Heart right ventricle (tissue), 16 donors: ENCODE measurements at regions of chr10 and their contacts with region 1.

Region 1: DNA sequence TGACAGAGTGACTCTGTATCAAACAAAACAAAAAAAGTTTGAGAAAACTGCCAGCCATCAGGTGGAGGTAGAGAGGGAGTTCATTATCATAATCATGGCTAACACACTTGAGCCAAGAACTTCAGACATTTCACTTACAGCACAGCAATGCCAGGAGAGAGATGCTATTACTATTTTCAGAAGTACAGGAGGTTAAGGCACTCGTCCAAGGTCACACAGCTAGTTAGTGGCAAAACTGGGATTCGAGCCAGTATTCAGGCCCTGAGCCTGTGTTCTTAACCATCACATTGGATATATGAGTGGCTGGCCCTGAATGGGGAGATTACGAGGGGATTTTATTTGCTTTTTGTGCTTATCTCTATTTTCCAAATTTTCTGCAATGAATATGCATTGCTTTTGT is 24.8 kb upstream of the UNC5B start:
- DNase-seq: peak in 1 of 2 donors; percentile 72
- ATAC-seq: peak; percentile 62 to 92 (median 86)
- H3K4me3 ChIP-seq: no peak overlapping the region
- H3K27ac ChIP-seq: peak overlapping the region in 3 of 10 donors; percentile 3 to 53 (median 7)
- H3K4me1 ChIP-seq: peaks cover 0 to 31% (median 10%) of the 10 kb centered on the region in 9 donors
- H3K27me3 ChIP-seq: peaks cover 0 to 12% (median 0%) of the 10 kb centered on the region in 7 donors
- CTCF ChIP-seq: peak in 1 of 9 donors; percentile 12

Region 2: GRCh38 chr10:70985824-70986622 is 201.6 kb before region 1 on chr10:
- intact Hi-C with region 1: no loop called
- DNase-seq: peak in 1 of 2 donors; percentile 16
- ATAC-seq: peak in 7 of 8 donors; percentile 32 to 86 (median 69)
- H3K4me3 ChIP-seq: no peak overlapping the region
- H3K27ac ChIP-seq: no peak overlapping the region
- H3K4me1 ChIP-seq: no peaks in the 10 kb centered on the region
- H3K27me3 ChIP-seq: no peaks in the 10 kb centered on the region
- CTCF ChIP-seq: no peak

Region 3: DNA sequence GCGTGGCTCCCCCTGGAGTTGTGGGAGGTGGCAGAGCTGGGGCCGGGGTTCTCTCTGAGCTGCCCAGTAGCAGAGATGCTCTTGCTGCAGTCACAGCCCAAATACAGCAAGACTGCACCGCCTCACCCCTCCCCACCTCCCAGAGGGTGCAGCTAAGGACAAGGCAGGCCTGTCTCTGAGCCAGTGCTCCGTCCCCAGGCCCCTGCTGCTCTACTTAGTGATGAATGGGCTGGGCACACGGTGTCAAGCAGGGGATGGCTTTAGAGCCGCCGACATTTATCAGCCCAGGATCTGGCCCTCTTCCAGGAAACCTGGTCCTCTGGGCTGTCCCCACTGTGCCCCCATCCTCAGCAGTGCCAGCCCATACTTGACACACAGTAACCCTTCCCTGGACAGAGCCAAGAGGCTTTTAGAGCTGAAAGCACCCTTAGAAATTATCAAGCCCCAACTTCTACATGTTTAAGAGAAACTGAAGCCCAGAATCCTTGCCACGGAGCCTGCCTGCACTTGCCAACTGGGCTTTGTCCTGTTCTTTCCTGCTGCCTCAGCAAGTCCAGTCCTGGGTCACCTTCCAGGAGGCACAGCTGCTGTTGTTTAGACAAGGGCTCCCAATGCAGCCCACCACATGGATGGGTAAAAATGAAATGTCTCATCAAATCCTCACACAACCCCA is 112.4 kb before region 1 on chr10:
- intact Hi-C with region 1: loop called in 2 of 10 experiments (anchors 10 kb)
- DNase-seq: peak in 1 of 2 donors; percentile 61
- ATAC-seq: peak; percentile 46 to 88 (median 61)
- H3K4me3 ChIP-seq: no peak overlapping the region
- H3K27ac ChIP-seq: no peak overlapping the region
- H3K4me1 ChIP-seq: peaks cover 0 to 35% (median 10%) of the 10 kb centered on the region in 9 donors
- H3K27me3 ChIP-seq: peaks cover 0 to 3% (median 0%) of the 10 kb centered on the region in 7 donors
- CTCF ChIP-seq: no peak

Region 4: DNA sequence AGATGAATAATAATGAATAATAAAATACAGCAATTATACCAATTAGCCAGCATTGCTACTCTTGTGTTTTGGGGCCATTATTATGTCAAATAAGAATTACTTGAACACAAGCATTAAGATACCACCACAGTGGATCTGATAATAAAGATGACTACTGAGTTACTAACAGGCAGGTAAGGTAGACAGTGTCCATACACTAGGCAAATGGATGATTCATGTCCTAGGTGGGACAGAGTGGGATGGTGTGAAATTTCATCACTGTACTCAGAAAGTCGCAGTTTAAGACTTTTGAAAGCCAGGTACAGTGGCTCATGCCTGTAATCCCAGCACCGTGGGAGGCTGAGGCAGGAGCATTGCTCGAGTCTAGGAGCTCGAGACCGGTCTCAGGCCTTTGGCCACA is 16.1 kb after region 1 on chr10:
- intact Hi-C with region 1: loop called in 1 of 10 experiments (anchors 2 kb)
- DNase-seq: no peak
- ATAC-seq: no peak
- H3K4me3 ChIP-seq: no peak overlapping the region
- H3K27ac ChIP-seq: no peak overlapping the region
- H3K4me1 ChIP-seq: peaks cover 0 to 21% (median 7%) of the 10 kb centered on the region in 9 donors
- H3K27me3 ChIP-seq: peaks cover 0 to 21% (median 0%) of the 10 kb centered on the region in 7 donors
- CTCF ChIP-seq: no peak

Region 5: GRCh38 chr10:71860243-71861029 is 672.8 kb after region 1 on chr10:
- intact Hi-C with region 1: no loop called
- DNase-seq: peak; percentile 89 to 94
- ATAC-seq: peak; percentile 97 to 99 (median 98)
- H3K4me3 ChIP-seq: peak overlapping the region in 1 of 10 donors; percentile 3
- H3K27ac ChIP-seq: peak overlapping the region; percentile 42 to 95 (median 86)
- H3K4me1 ChIP-seq: peaks cover 3 to 54% (median 23%) of the 10 kb centered on the region in 9 donors
- H3K27me3 ChIP-seq: no peaks in the 10 kb centered on the region
- CTCF ChIP-seq: no peak